Dorsolateral prefrontal cortex (tissue), 120 donors: ENCODE measurements at regions of chr3 and their contacts with region 1.

Region 1: DNA sequence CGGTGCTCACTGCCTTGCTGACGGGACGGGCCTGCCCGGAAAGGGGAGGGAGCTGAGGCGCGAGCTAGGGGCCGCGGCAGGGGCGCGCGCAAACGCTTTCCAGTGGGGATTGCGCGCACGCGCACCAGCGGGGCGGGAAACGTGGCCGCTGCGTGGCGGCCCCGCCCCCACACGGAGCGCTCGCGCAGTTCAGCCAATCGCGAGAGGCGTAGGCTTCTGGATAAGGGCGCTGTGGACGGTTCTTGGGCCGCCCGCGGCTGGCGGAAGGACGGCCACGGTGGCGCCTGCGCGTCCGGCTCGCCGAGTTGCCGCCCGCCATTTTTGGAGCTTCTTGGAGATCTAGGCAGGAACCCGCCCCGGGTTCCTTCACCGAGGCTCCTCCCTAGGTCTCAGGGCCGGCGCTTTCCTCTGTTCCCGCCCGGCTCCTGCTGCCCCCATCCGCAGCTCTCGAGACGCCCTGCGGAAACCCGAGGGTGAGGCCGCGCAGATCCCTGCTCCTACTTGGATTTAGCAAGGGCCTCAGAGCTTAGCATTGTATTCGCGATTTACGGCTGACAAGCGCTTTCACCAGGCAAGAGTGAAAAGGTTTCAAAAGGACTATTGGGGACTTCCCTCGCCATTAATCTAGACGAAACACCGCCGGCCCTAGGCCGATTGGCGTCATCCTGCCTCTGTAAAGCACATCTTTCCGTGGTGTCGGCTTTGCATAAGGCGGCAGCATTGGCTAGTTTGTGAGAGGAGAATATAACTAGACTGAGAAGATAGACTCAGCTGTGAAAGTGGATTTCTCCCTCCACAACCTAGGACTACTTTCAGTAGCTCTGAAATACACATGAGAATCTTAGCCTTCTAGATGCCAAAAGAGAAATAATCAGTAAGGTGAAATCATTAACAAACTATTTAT is 496 bp upstream of the STAG1 start:
- DNase-seq: peak; percentile 96 to 99 (median 98)
- H3K4me3 ChIP-seq: peak overlapping the region; percentile 47 to 93 (median 78)
- H3K27ac ChIP-seq: peak overlapping the region; percentile 91 to 100 (median 99)
- H3K27me3 ChIP-seq: no peaks in the 10 kb centered on the region
- CTCF ChIP-seq: peak in 38 of 56 donors; percentile 3 to 100 (median 26)

Region 2: GRCh38 chr3:136075218-136075808 is 677.4 kb before region 1 on chr3:
- intact Hi-C with region 1: loop called (anchors 2 kb)
- DNase-seq: peak; percentile 42 to 88 (median 65)
- H3K4me3 ChIP-seq: no peak overlapping the region
- H3K27ac ChIP-seq: peak overlapping the region in 6 of 59 donors; percentile 10 to 51 (median 23)
- H3K27me3 ChIP-seq: no peaks in the 10 kb centered on the region
- CTCF ChIP-seq: peak; percentile 85 to 99 (median 95)

Region 3: DNA sequence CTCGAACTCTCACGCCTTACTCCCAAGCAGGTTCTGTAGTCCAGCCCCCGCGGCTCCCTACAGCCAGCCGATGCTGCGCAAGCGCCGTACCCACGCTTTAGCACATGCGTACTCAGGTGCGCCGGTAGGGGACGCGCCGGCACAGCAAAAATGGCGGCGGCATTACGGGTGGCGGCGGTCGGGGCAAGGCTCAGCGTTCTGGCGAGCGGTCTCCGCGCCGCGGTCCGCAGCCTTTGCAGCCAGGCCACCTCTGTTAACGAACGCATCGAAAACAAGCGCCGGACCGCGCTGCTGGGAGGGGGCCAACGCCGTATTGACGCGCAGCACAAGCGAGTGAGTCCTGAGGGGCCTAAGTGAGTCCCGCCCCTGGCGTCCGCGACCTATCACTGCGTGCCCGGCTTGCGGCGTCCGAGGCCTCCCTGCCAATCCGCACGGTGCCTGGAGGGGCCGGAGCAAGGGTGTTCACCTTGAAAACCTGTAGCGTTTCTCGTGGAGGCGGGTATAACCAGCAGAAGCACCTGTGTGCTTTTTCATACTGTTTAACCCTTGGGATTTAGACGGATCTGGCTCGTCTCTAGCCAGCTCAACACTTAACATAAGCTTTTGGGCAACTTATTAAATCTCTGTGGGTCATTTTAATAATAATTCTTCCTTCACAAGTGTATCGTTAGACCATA is 502.3 kb before region 1 on chr3 and contains the start of gene PCCB:
- intact Hi-C with region 1: loop called (anchors 1 to 5 kb)
- DNase-seq: peak; percentile 84 to 94 (median 90)
- H3K4me3 ChIP-seq: peak within 1 kb of the TSS; percentile 42 to 93 (median 81)
- H3K27ac ChIP-seq: peak within 1 kb of the TSS; percentile 72 to 99 (median 95)
- H3K27me3 ChIP-seq: no peaks in the 10 kb centered on the region
- CTCF ChIP-seq: peak; percentile 58 to 94 (median 82)
- total RNA-seq, gene PCCB: 37.3 to 110 (median 59.5) TPM

Region 4: GRCh38 chr3:136390574-136390973 is 362.1 kb before region 1 on chr3:
- intact Hi-C with region 1: loop called (anchors 2 to 5 kb)
- DNase-seq: no peak
- H3K4me3 ChIP-seq: no peak overlapping the region
- H3K27ac ChIP-seq: no peak overlapping the region
- H3K27me3 ChIP-seq: no peaks in the 10 kb centered on the region
- CTCF ChIP-seq: no peak

Region 5: DNA sequence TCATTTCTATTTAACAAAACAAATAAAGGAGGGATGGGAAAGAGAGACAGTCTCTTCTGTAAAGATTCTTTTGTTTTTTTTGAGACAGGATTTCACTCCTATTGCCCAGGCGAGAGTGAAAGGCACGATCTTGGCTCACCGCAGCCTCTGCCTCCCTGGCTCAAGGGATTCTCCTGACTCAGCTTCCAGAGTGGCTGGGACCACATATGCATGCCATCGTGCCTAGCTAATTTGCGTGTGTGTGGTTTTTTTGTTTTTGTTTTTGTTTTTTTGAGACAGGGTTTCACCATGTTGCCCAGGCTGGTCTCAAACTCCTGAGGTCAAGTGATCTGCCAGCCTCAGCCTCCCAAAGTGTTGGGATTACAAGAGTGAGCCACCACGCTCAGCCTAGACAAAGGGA is 23.8 kb before region 1 on chr3:
- intact Hi-C with region 1: no loop called
- DNase-seq: no peak
- H3K4me3 ChIP-seq: peak overlapping the region in 53 of 59 donors; percentile 0 to 58 (median 34)
- H3K27ac ChIP-seq: peak overlapping the region in 15 of 59 donors; percentile 1 to 46 (median 27)
- H3K27me3 ChIP-seq: no peaks in the 10 kb centered on the region
- CTCF ChIP-seq: no peak

Region 6: DNA sequence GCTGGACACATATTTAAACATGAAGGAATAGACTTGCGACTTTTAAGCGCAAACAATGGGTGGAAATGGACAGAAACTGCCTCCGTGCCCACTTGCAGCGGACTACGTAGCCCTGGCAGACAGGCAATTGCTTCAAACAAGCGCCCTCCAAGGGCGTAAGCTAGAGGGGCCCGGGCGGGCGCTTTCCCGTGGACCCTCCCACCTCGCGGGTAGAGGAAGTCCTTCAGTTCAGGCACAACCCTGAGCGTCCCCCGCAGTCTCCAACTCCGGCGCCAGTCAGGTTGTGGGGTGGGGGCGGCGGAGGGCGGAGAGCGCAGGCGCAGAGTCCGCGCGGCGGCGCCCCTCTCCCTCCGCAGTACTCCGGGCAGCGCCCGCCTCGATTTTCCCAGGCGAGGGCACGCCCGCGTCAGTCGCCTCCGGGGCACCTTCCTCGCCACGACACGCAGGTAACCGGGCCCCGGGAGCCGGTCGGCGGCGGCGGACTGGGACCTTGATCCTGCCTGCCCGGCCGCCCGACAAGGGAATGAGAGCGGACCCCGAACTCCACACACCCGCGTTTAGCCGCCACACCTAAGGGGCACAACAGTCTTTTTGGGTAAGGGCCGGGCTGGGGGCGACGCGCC is 66.2 kb after region 1 on chr3 and contains the start of gene SLC35G2:
- intact Hi-C with region 1: loop called (anchors 1 to 5 kb)
- DNase-seq: peak; percentile 32 to 82 (median 62)
- H3K4me3 ChIP-seq: peak within 1 kb of the TSS; percentile 53 to 93 (median 81)
- H3K27ac ChIP-seq: peak within 1 kb of the TSS in 58 of 59 donors; percentile 5 to 96 (median 88)
- H3K27me3 ChIP-seq: no peaks in the 10 kb centered on the region
- CTCF ChIP-seq: peak in 16 of 56 donors; percentile 8 to 28 (median 18)
- total RNA-seq, gene SLC35G2: 10.8 to 33.7 (median 20.3) TPM

Region 7: DNA sequence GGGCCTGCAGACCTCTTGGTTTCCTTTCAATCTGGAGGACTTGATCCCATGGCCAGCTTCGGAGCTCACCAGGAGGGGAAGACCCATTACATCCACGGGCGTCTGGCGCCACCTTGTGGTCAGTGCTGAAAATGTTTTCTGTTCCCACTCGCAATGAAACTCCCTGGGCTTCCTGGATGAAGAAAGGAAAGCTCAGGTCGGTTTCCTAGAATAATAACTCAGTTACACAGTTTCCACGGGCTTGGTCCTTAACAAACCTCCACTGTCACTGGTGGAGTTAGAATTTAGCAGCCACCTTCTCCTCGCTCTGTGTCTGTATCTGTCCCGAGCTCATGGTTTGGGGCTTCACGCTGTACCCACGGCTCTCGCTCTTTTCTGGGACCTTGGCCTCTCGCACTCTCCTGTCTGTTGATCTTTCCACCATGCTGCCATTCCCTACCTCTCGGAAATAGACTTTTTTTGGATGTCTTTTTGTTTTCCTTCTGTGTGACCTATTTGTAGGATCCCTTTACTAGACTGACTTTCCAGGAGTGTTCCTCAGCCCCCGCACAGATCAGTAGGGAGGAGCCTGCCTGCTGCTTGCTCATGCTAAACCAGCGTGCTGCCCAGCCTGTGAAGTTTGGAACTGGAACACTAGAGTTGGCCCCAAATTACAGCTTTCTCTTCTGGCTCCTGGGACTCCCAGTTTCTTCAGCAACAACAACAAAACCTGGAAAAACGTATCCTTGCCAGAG is 261.4 kb after region 1 on chr3:
- intact Hi-C with region 1: loop called (anchors 2 kb)
- DNase-seq: peak; percentile 86 to 95 (median 92)
- H3K4me3 ChIP-seq: peak overlapping the region; percentile 11 to 71 (median 53)
- H3K27ac ChIP-seq: peak overlapping the region in 28 of 59 donors; percentile 1 to 83 (median 42)
- H3K27me3 ChIP-seq: no peaks in the 10 kb centered on the region
- CTCF ChIP-seq: peak; percentile 89 to 99 (median 96)